ENCODE measurements at regions of chr15 and their contacts with region 1.

Region 1: DNA sequence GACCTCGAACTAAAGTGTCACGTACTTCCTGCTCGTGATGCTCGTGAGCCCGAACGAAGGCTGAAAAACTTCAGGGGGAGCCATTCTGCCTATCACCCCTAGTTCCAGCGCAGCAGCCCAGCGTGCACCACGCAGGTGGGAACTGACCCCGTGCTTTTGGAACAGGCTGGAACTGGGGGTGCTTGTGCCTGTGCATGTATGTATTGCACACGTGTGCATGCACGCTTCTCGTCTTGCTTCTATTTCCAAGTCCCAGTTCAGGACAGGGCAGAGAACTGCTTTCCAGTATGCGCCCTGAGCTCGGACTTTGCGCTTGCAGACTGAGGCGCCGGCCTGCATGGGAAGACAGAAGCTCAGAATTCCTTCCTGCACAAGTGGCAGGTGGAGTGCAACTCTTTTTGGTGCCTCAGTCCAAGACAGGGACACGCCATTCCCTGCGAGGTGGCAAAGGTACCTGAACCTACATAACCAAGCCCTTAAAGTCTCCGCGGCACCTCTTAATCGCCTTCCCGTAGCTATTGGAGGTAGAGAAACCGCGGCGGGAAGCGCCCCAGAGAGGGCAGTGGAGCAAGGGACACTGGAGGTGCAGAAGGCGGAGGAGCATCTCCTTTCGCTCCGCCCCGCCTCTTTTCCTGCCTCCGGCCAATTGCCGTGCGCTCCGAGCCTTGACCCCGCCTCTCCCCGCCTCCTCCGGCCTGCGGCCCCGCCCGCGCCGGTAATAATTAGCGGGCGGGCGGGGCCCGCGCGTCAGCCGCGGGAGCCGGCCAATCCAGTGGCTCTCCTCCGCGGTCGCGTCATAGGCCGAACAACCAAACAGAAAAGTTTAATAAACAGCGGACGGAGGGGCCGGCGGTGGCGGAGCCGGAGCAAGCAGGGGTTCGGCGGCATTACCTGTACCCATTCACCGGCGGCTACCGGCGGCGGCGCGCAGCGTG is at the start of gene ZFAND6:
- DNase-seq: peak; percentile 96
- H3K4me3 Mint-ChIP-seq: peak within 1 kb of the TSS; percentile 87
- H3K27ac Mint-ChIP-seq: peak within 1 kb of the TSS; percentile 89
- H3K4me1 Mint-ChIP-seq: peaks cover 27% of the 10 kb centered on the region
- H3K27me3 Mint-ChIP-seq: no peaks in the 10 kb centered on the region
- total RNA-seq, gene ZFAND6: 28.9 to 29.6 TPM

Region 2: DNA sequence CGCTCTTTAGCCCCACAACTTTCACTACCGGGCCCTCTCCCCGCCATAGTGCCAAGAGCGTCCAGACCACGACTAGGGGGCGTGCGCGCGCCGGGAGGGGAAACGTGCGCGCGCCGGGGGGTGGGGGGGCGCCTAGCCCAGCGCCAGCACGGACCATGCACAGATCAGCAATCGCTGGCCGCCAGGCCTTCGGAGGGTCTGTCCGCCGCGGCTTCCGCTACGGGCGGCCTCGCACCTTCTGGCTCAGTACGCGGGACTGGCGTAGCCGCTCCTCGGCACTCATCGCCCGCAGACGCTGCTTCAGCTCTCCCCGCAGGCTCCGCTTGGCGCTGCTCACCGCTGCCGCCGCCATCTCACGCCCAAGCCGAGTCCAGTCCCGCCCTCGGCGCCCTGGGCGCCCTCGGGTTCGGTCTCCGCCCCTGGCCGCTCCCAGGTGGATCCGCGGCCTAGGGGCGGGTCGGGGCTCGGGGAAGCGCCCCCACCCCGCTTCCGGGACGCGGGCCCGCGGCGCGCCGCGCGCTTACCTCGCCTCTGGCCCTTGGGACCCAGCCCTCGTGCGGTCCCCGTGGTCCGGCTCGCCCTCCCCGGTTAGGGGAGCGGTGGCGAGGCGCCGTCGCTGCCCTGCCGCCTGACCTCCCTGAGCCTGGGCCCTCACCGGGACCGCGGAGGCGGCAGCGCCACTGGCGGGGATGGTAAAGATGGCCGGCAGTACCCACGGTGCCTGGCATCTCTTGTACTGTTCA is 162.3 kb before region 1 on chr15 and contains the start of gene MTHFS:
- CTCF ChIA-PET with region 1: no interaction called
- intact Hi-C with region 1: loop called (anchors 2 kb)
- DNase-seq: peak; percentile 76
- H3K4me3 Mint-ChIP-seq: peak within 1 kb of the TSS; percentile 100
- H3K27ac Mint-ChIP-seq: peak within 1 kb of the TSS; percentile 100
- H3K4me1 Mint-ChIP-seq: peaks cover 42% of the 10 kb centered on the region
- H3K27me3 Mint-ChIP-seq: no peaks in the 10 kb centered on the region
- total RNA-seq, gene MTHFS: 44.8 to 47.0 TPM

Region 3: GRCh38 chr15:80072285-80072994 is 13.3 kb after region 1 on chr15:
- CTCF ChIA-PET with region 1: interaction called, 5 read pairs
- intact Hi-C with region 1: loop called (anchors 1 kb)
- DNase-seq: peak; percentile 33
- H3K4me3 Mint-ChIP-seq: peak overlapping the region; percentile 82
- H3K27ac Mint-ChIP-seq: peak overlapping the region; percentile 75
- H3K4me1 Mint-ChIP-seq: peaks cover 62% of the 10 kb centered on the region
- H3K27me3 Mint-ChIP-seq: no peaks in the 10 kb centered on the region

Region 4: DNA sequence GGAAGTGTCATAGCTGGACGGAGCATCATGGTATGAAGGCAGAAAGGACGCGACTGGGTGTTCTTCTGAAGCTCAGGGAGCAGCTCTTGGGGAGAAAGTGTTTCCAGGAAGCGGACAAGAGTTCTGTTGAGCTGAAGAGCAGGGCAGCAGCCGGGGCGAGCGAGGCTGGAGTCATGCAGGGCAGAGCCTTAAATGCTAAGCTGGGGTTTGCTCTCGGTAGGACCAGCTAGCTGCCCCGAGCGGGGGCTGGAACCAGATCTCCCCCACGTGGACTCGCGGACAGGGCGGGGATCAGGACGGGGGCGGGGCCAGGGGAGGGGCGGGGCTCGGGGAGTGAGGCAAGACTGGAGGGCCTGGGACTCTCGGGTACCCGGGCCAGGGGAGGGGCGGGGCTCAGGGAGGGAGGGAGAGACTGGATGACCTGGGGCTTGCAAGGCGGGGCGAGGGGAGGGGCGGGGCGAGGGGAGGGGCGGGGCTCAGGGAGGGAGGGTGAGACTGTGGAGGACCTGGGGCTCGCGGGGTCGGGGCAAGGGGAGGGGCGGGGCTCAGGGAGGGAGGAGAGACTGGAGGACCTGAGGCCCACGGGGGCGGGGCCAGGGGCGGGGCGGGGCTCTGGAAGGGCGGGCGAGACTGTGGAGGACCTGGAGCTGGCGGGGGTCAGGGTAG is 93.2 kb after region 1 on chr15:
- CTCF ChIA-PET with region 1: interaction called, 4 read pairs
- intact Hi-C with region 1: loop called (anchors 1 kb)
- DNase-seq: peak; percentile 96
- H3K4me3 Mint-ChIP-seq: peak overlapping the region; percentile 87
- H3K27ac Mint-ChIP-seq: peak overlapping the region; percentile 36
- H3K4me1 Mint-ChIP-seq: peaks cover 19% of the 10 kb centered on the region
- H3K27me3 Mint-ChIP-seq: no peaks in the 10 kb centered on the region

Region 5: DNA sequence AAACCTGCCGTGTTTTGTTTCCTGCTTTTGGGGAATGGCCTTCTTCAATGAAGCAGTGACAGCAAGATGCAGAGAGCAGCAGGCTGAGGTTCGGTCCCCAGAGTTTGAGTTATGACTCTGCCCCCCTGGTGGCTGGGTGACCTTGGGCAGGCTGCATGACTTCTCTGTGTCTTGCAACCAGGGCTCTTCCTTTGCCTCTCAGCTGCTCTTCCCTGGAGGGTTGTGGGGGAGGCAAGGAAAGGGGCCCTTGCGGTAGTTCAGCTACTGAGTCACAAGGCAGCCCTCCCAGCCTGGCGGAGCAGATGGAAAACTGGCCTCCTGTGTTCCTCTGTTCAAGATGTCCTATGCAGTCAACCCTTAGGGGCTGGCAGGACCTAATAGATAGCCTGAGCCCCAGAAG is 175.8 kb after region 1 on chr15:
- CTCF ChIA-PET with region 1: no interaction called
- intact Hi-C with region 1: loop called (anchors 2 kb)
- DNase-seq: peak; percentile 66
- H3K4me3 Mint-ChIP-seq: no peak overlapping the region
- H3K27ac Mint-ChIP-seq: no peak overlapping the region
- H3K4me1 Mint-ChIP-seq: no peaks in the 10 kb centered on the region
- H3K27me3 Mint-ChIP-seq: peaks cover 17% of the 10 kb centered on the region

Region 6: DNA sequence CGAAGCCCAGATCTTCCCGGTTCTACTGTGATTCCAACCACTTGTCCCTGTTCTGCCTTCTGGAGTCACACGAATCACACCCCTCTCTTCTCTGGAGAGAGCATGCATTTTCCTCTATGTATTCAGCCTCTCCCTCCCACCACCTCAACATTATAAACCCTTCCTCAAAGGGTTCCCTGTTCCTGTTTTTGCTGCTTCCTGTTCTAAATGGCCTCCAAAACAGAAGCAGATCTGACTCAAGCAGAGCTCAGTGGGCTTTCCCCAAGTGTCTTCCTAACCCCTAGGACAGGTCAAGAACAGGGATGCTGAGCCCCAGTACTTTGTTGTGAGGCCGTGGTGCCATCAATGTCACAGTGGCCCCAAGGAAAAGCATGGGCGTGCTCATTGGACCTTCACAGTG is 269.4 kb after region 1 on chr15:
- CTCF ChIA-PET with region 1: no interaction called
- intact Hi-C with region 1: no loop called
- DNase-seq: no peak
- H3K4me3 Mint-ChIP-seq: no peak overlapping the region
- H3K27ac Mint-ChIP-seq: no peak overlapping the region
- H3K4me1 Mint-ChIP-seq: no peaks in the 10 kb centered on the region
- H3K27me3 Mint-ChIP-seq: peaks cover 4% of the 10 kb centered on the region

Measured in activated naive CD4-positive, alpha-beta T cell treated with anti-CD3 and anti-CD28 coated beads for 36 hours (primary cell).